Thyroid gland (tissue), 4 donors: ENCODE measurements at regions of chr19 and their contacts with region 1.

Region 1: DNA sequence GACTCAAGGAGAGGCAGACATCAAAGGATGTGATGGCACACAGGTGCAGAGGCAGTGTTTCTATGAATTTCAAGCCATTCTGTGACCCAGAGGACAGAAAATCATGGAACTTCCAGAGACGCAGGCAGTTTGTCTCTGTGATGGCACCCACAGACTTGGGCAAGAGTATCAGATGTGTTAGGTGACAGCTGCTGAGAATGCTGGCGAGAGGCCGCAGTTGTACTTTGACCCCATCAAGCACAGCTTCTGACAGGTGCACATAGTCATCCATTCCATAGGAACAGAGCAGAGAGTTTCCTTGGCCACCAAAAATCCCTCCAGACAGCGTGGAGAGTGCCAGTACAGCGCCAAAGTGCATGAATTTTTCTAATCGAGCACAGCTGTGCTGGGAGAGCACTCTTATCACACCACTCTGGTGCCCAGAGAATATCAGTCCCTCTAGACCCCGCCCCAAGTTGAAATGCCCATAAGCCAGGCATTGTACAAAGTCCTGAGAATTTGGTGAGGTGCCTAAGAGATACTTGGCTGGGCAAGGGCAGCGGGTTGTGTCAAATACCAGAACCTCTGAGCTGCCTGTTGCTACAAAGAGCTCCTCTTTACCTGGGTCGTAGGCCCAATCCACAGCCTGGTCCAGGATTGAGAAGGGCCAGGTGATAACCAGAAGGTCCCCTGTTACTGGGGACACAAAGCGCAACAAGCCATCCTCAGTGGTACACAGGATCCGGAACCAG is 12.4 kb downstream of the WDR87 start:
- DNase-seq: peak; percentile 52 to 56
- H3K4me3 ChIP-seq: no peak overlapping the region
- H3K27ac ChIP-seq: peak overlapping the region in 1 of 3 donors; percentile 33
- H3K4me1 ChIP-seq: peaks cover 6 to 8% of the 10 kb centered on the region in 2 donors
- H3K27me3 ChIP-seq: no peaks in the 10 kb centered on the region
- CTCF ChIP-seq: no peak
- POLR2A ChIP-seq: no peak

Region 2: DNA sequence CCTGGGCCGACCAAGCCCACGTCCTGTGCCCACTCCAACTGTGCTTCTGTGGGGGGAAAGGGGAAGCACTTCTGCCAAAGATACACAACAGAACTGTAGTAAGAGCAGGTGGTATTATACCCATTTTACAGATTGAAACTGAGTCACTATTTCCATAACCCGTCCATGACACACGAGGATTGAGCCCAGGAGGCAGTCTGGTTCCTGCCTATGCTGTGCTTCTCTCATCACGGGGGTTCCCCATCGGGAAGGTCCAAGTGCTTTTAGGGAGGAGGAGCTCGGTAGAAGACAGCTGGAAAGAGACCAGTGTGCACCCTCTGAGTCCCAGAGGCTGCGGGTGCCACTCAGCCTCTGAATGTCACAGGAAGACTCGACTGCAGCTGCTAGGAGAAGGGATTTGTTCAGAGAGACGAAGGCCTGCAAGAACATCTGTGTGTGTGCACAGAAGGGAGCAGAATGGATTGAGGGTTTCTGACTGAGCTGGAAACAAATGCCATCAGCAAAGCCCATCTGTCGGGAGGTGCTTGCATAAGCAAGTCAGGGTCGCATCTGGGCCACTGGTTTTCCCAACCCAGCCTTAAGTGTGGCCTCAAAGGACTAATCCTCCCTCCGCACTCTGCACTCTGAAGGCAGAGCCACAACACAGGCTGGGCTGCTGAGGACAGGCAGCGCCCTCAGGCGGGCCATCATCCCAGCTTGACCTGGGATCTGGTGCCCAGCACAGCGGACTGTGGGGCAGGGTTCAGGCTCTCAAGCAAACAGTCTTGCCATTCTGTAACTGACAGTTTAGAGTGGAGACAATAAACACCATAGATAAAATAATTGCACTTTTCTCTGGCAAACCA is 180.1 kb after region 1 on chr19:
- intact Hi-C with region 1: no loop called
- DNase-seq: no peak
- H3K4me3 ChIP-seq: no peak overlapping the region
- H3K27ac ChIP-seq: no peak overlapping the region
- H3K4me1 ChIP-seq: peaks cover 27 to 32% of the 10 kb centered on the region in 2 donors
- H3K27me3 ChIP-seq: no peaks in the 10 kb centered on the region
- CTCF ChIP-seq: no peak
- POLR2A ChIP-seq: no peak

Region 3: GRCh38 chr19:38095411-38096308 is 201.7 kb after region 1 on chr19:
- intact Hi-C with region 1: loop called (anchors 5 kb)
- DNase-seq: peak; percentile 96
- H3K4me3 ChIP-seq: no peak overlapping the region
- H3K27ac ChIP-seq: peak overlapping the region; percentile 70 to 87 (median 86)
- H3K4me1 ChIP-seq: peaks cover 50 to 62% of the 10 kb centered on the region in 2 donors
- H3K27me3 ChIP-seq: no peaks in the 10 kb centered on the region
- CTCF ChIP-seq: peak; percentile 55 to 90 (median 80)
- POLR2A ChIP-seq: peak in 1 of 2 donors; percentile 35

Region 4: GRCh38 chr19:38213911-38214625 is 320.1 kb after region 1 on chr19:
- intact Hi-C with region 1: loop called (anchors 10 kb)
- DNase-seq: peak; percentile 25 to 27
- H3K4me3 ChIP-seq: no peak overlapping the region
- H3K27ac ChIP-seq: no peak overlapping the region
- H3K4me1 ChIP-seq: peaks cover 0 to 25% of the 10 kb centered on the region in 2 donors
- H3K27me3 ChIP-seq: peaks cover 7% of the 10 kb centered on the region
- CTCF ChIP-seq: no peak
- POLR2A ChIP-seq: no peak

Region 5: DNA sequence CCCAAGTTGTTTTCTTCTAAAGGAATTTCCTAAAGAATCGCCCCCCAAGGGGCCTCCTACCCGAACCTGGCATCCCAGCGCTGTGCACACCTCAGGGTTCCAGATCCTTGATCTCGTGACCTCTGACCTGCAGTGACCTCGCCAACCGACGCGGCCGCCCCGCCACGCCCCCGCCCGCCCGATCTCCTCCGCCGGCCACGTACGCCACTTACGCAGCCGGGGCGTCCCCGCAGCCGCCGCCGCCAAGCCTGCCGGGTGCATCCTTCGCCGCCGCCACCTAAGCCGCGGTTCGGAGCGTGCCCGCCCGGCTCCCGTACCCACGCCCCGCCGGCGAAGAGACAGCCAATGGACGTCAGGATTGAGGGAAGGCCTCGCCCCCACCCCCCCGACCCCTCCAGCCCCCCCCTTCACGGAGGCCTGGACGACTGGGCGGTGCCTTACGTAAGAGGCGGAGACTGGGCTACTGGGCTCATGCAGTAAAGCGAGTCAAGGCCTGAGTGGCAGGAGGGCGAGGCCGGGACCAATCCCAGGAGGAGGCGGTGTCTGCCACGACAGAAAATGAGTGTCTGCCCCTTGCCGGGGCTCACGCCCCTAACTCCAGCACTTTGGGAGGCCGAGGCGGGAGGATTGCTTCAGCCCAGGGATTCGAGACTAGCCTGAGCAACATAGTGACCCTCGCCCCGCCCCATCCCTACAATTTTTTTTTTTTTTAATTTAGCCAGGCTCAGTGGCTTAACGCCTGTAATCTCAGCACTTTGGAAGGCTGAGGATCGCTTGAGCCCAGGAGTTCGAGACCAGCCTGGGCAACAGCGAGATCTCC is 421.9 kb after region 1 on chr19 and contains the start of gene YIF1B:
- intact Hi-C with region 1: loop called (anchors 10 kb)
- DNase-seq: peak; percentile 96 to 97
- H3K4me3 ChIP-seq: peak within 1 kb of the TSS; percentile 10 to 57 (median 43)
- H3K27ac ChIP-seq: peak within 1 kb of the TSS; percentile 72 to 85 (median 77)
- H3K4me1 ChIP-seq: peaks cover 0 to 21% of the 10 kb centered on the region in 2 donors
- H3K27me3 ChIP-seq: no peaks in the 10 kb centered on the region
- CTCF ChIP-seq: no peak
- POLR2A ChIP-seq: peak in 1 of 2 donors; percentile 45
- total RNA-seq, gene YIF1B: 12.9 to 30.9 (median 21.0) TPM